ENCODE measurements at regions of chr3 and their contacts with region 1.

Region 1: DNA sequence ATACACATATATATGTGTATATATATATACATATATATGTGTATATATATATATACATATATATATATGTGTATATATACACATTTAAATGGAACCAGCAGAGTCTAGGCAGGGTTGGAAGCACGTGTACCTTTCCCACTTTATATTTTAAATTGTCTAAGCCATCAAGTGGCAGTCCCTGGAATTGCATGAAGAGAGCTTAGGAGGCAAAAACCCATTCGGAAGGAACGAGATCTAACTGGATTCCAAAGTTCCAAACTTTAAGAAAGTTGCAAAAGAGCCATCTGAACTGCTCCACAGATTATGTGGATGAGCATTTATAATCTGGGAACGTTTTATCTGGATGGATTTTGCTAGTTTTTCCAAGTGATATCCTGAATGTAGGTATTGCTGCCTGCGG is 186.5 kb downstream of the FOXP1 start:
- DNase-seq: no peak
- ATAC-seq: peak; percentile 57; the same call in 1 of the 2 replicates
- H3K4me3 Mint-ChIP-seq: no peak overlapping the region
- H3K27ac Mint-ChIP-seq: no peak overlapping the region
- H3K4me1 Mint-ChIP-seq: peaks cover 18% of the 10 kb centered on the region
- H3K27me3 Mint-ChIP-seq: no peaks in the 10 kb centered on the region
- CTCF ChIP-seq: no peak

Region 2: GRCh38 chr3:71384837-71385716 is 12.0 kb before region 1 on chr3:
- CTCF ChIA-PET with region 1: interaction called, 16 read pairs
- POLR2A ChIA-PET with region 1: no interaction called
- DNase-seq: no peak
- ATAC-seq: peak; percentile 25; the same call in 1 of the 2 replicates
- H3K4me3 Mint-ChIP-seq: no peak overlapping the region
- H3K27ac Mint-ChIP-seq: peak overlapping the region; percentile 75; the same call in 1 of the 2 replicates
- H3K4me1 Mint-ChIP-seq: peaks cover 66% of the 10 kb centered on the region
- H3K27me3 Mint-ChIP-seq: no peaks in the 10 kb centered on the region
- CTCF ChIP-seq: no peak

Region 3: GRCh38 chr3:71416876-71417275 is 19.8 kb after region 1 on chr3:
- CTCF ChIA-PET with region 1: interaction called, 13 read pairs
- POLR2A ChIA-PET with region 1: no interaction called
- DNase-seq: peak; percentile 41
- ATAC-seq: peak; percentile 92
- H3K4me3 Mint-ChIP-seq: no peak overlapping the region
- H3K27ac Mint-ChIP-seq: no peak overlapping the region
- H3K4me1 Mint-ChIP-seq: peaks cover 19% of the 10 kb centered on the region
- H3K27me3 Mint-ChIP-seq: no peaks in the 10 kb centered on the region
- CTCF ChIP-seq: 0 out of 2 replicates have a peak, but pooled peaks have one; percentile 14

Region 4: DNA sequence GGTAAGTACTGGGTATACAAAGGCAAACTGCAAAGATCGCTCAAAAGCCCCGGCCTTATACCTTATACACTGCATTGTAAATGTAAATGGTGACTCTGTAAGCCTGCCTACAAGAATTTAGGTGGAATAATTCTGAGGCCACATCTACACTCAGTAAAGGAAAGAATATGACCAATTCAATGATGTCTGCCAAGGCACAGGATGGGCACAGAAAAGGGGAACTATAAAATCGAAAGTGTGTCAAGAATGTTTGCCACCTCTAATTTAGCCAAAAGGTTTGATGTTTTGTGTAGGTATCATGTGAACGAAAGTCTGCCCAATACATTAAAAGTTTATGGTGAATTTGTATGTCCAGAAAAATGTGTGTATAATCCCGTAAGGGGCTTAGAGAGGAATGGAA is 90.4 kb after region 1 on chr3:
- CTCF ChIA-PET with region 1: no interaction called
- POLR2A ChIA-PET with region 1: no interaction called
- DNase-seq: no peak
- ATAC-seq: no peak
- H3K4me3 Mint-ChIP-seq: no peak overlapping the region
- H3K27ac Mint-ChIP-seq: no peak overlapping the region
- H3K4me1 Mint-ChIP-seq: peaks cover 35% of the 10 kb centered on the region
- H3K27me3 Mint-ChIP-seq: no peaks in the 10 kb centered on the region
- CTCF ChIP-seq: no peak

Measured in WTC11 (cell line).